ENCODE measurements at regions of chr1 and their contacts with region 1.

Region 1: GRCh38 chr1:206663832-206664652 is 20.7 kb upstream of the MAPKAPK2 start:
- DNase-seq: no peak
- H3K4me3 ChIP-seq: no peak overlapping the region; the same call in 1 of the 2 replicates
- CTCF ChIP-seq: peak; percentile 66

Region 2: GRCh38 chr1:204670152-204670927 is 1993.7 kb before region 1 on chr1:
- CTCF ChIA-PET with region 1: no interaction called
- POLR2A ChIA-PET with region 1: no interaction called
- DNase-seq: peak; percentile 9
- H3K4me3 ChIP-seq: no peak overlapping the region
- CTCF ChIP-seq: no peak

Region 3: GRCh38 chr1:206507284-206508129 is 156.5 kb before region 1 on chr1 and contains the start of gene RASSF5:
- CTCF ChIA-PET with region 1: interaction called, 18 read pairs
- POLR2A ChIA-PET with region 1: no interaction called
- DNase-seq: no peak
- H3K4me3 ChIP-seq: peak within 1 kb of the TSS; percentile 61
- CTCF ChIP-seq: no peak

Region 4: DNA sequence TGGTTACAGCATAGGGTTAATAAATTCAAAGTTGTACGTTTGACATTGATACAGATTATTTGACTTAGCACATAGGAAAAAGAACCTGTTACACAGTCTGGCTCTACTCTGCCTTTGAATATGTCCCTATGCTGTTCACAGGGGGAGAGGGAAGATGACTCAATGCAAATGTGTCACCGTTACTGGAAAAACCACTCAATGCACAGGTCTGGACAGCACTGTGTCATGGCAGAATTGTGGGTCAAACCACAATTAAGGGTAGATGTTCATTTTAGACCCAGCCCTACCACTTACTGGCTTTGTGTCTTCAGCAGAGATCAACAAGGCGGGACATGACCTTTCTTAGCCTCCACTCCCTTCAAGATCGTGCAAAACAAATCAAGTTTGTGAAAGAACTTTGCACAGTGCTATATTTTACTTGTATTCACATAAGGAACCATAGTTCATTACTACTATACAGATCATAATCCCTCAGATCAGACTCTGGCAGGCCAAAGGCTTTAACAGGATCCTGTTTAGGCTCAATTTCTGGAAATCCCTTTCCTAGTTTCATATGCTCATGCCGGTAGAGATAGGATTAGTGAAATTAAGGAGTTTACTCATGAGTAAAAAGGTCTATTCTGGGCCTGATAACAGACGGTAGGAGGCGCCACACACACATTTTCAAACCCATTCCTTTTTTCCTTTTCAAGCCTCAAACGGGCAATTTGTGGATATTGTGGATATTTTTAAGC is 73.8 kb before region 1 on chr1:
- CTCF ChIA-PET with region 1: interaction called, 21 read pairs
- POLR2A ChIA-PET with region 1: no interaction called
- DNase-seq: peak; percentile 41
- H3K4me3 ChIP-seq: no peak overlapping the region
- CTCF ChIP-seq: no peak

Region 5: DNA sequence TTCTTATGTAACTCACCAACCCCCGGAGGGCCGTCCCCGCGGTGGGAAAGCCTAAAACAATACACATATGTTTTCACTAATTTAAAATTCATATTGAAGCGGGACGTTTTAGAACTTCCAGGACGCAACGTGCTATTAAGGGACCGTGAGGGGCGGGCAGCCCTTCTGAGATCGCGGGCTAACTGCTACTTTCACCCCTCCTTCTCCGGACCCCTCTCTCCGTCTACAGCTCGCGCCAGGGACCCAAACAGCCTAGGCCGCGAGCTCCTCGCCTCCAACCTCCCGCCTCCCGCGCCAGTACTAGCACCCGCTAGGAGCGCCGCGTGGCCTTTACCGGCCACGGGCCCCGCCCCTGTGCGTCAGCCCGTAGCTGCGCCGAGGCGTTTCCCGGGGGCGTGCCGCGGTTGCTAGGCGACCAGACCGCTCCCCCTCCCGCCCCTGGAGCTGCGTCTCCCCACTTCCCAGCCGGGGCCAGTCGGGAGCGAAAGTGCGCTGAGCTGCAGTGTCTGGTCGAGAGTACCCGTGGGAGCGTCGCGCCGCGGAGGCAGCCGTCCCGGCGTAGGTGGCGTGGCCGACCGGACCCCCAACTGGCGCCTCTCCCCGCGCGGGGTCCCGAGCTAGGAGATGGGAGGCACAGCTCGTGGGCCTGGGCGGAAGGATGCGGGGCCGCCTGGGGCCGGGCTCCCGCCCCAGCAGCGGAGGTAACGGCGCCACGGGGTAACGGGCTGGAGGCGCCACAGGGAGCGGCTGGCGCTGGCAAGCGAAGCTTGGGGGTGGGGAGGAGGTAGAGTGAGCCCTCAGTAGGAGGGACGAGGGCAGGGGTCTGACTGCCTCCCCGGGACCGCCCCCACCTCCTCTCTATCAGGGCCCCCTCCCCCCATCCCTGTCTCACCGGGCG is 28.7 kb before region 1 on chr1 and contains the start of gene DYRK3:
- CTCF ChIA-PET with region 1: interaction called, 1,486 read pairs
- POLR2A ChIA-PET with region 1: interaction called, 16 read pairs
- DNase-seq: no peak
- H3K4me3 ChIP-seq: peak within 1 kb of the TSS; percentile 86
- CTCF ChIP-seq: no peak

Region 6: GRCh38 chr1:206706298-206706791 is 42.3 kb after region 1 on chr1:
- CTCF ChIA-PET with region 1: interaction called, 10 read pairs
- POLR2A ChIA-PET with region 1: no interaction called
- DNase-seq: peak; percentile 75
- H3K4me3 ChIP-seq: peak overlapping the region; percentile 2
- CTCF ChIP-seq: no peak